ENCODE measurements at regions of chrX and their contacts with region 1.

Region 1: GRCh38 chrX:71622576-71623450 is 4.5 kb upstream of the CXCR3 start:
- DNase-seq: peak in 9 of 10 donors; percentile 17 to 75 (median 53)
- ATAC-seq: peak; percentile 51 to 59
- H3K4me3 Mint-ChIP-seq: peak overlapping the region; percentile 20 to 86 (median 64)
- H3K27ac Mint-ChIP-seq: peak overlapping the region; percentile 87 to 95 (median 91)
- H3K4me1 Mint-ChIP-seq: peaks cover 18 to 61% (median 57%) of the 10 kb centered on the region in 4 donors
- H3K27me3 Mint-ChIP-seq: no peaks in the 10 kb centered on the region

Region 2: GRCh38 chrX:71606536-71607216 is 16.1 kb before region 1 on chrX:
- POLR2A ChIA-PET with region 1: interaction called, 33 read pairs
- DNase-seq: peak in 7 of 10 donors; percentile 25 to 79 (median 68)
- ATAC-seq: peak; percentile 92 to 93
- H3K4me3 Mint-ChIP-seq: peak overlapping the region; percentile 42 to 79 (median 72)
- H3K27ac Mint-ChIP-seq: peak overlapping the region; percentile 92 to 99 (median 96)
- H3K4me1 Mint-ChIP-seq: peaks cover 28 to 70% (median 58%) of the 10 kb centered on the region in 4 donors
- H3K27me3 Mint-ChIP-seq: no peaks in the 10 kb centered on the region

Measured in naive thymus-derived CD8-positive, alpha-beta T cell (primary cell).